BJ (cell line): ENCODE measurements at regions of chr20 and their contacts with region 1.

Region 1: GRCh38 chr20:39049684-39050554 is 87.8 kb downstream of the DHX35 start:
- DNase-seq: no peak
- H3K4me3 ChIP-seq: peak overlapping the region; percentile 73
- H3K27me3 ChIP-seq: peaks cover 4% of the 10 kb centered on the region
- CTCF ChIP-seq: peak; percentile 88

Region 2: DNA sequence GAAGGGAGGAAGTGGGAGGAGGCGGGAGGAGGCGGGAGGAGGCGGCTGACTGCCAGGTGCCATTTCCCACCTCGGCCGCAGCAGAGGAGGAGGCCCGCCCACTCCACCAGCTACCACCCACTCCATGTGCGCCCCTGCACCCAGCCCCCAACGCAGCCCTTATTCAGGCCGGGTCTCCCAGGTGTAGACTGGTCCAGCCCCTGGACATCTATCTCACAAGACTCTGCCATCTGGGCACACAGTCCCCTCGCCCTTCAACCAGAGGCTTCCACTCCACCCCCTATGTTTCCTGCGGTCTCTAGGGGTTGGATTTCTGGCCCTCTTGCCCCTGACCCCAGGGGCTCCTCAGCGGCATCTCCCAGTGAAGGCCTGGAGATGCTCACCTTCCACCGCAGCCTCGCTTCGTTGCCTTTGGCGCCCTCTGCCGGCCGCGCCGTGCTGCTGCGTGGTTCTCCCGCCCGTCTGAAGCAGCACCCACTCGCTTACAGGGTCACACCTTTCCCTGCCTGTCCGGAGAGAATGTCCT is 156.3 kb before region 1 on chr20:
- CTCF ChIA-PET with region 1: interaction called, 10 read pairs
- POLR2A ChIA-PET with region 1: no interaction called
- DNase-seq: no peak
- H3K4me3 ChIP-seq: no peak overlapping the region
- H3K27me3 ChIP-seq: peaks cover 24% of the 10 kb centered on the region
- CTCF ChIP-seq: peak; percentile 97

Region 3: DNA sequence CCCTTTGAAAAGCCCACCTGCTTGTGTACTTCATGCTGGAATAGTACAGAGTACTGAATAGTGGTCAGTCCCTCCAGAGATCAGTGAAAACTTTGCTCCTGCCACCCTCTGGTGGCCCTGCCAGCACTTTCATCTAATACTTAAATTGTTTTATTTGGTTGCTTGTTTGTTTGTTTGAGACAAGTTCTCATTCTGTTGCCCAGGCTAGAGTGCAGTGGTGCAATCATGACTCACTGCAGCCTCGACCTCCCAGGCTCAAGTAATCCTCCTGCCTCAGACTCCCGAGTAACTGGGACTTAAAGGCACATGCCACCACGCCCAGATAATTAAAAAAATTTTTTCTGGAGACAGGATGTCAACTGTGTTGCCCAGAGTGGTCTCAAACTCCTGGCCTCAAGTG is 114.6 kb before region 1 on chr20:
- CTCF ChIA-PET with region 1: interaction called, 163 read pairs
- POLR2A ChIA-PET with region 1: no interaction called
- DNase-seq: no peak
- H3K4me3 ChIP-seq: no peak overlapping the region
- H3K27me3 ChIP-seq: no peaks in the 10 kb centered on the region
- CTCF ChIP-seq: peak; percentile 21; the same call in 1 of the 2 replicates

Region 4: DNA sequence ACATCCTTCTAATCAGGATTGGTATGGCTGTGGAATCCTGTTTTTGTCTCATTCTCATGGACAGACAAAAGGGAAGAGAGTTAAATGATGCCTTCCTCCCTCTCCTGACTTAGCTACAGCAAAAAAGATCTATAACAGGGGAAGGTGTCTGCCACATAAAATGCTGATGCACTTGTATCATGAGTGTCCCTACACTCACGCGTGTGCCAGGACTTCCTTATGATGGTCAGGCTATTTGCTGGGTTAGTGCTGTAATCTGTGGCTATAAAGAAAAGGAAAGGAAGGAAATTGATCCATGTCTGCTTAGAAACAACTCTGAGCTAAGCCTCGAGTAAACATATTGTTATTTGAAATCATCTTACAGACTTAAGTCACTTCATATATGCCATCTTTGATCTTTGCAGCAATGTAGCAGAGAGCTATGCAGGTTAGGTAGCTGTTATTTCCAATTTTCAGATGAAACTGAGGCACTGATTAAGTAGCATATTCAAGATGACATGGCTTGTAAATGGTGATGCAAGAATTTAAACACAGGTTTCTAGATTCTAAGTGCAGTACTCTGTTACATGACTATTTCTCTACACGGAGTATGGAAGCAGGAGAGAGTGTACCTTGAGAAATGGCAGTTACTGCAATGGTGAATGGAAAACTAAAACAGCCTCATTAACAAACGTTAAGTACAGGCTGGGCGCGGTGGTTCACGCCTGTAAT is 96.1 kb before region 1 on chr20:
- CTCF ChIA-PET with region 1: no interaction called
- POLR2A ChIA-PET with region 1: no interaction called
- DNase-seq: no peak
- H3K4me3 ChIP-seq: no peak overlapping the region
- H3K27me3 ChIP-seq: no peaks in the 10 kb centered on the region
- CTCF ChIP-seq: no peak

Region 5: DNA sequence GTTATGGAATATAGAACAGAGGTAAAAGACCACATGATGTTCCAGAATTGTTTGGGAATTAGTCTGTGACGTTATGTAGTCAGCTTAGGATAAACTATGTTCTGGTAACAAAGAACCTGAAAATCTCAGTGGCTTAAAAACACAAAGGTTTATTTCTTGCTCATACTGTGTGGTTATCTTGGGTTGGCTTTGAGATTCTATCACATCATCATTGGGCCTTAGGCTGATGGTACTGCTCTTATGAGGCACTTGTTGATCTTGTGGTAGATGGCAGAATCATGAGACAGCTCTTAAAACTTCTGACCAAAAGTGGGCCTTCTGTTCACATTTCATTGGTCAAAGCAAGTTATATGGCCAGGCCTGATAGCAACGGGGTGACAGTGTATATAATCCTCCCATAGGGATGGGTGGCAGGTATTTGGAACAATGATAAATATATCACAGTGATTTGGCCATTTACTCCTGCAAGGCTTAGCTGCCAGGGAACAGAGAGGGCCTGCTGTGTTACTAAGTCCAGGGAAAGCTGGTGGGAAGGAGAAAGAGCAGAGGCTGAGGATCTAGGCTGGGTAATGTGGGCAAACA is 74.3 kb before region 1 on chr20:
- CTCF ChIA-PET with region 1: no interaction called
- POLR2A ChIA-PET with region 1: no interaction called
- DNase-seq: no peak
- H3K4me3 ChIP-seq: no peak overlapping the region
- H3K27me3 ChIP-seq: no peaks in the 10 kb centered on the region
- CTCF ChIP-seq: no peak

Region 6: GRCh38 chr20:38987777-38988176 is 62.1 kb before region 1 on chr20:
- CTCF ChIA-PET with region 1: interaction called, 16 read pairs
- POLR2A ChIA-PET with region 1: no interaction called
- DNase-seq: no peak
- H3K4me3 ChIP-seq: no peak overlapping the region
- H3K27me3 ChIP-seq: no peaks in the 10 kb centered on the region
- CTCF ChIP-seq: no peak

Region 7: DNA sequence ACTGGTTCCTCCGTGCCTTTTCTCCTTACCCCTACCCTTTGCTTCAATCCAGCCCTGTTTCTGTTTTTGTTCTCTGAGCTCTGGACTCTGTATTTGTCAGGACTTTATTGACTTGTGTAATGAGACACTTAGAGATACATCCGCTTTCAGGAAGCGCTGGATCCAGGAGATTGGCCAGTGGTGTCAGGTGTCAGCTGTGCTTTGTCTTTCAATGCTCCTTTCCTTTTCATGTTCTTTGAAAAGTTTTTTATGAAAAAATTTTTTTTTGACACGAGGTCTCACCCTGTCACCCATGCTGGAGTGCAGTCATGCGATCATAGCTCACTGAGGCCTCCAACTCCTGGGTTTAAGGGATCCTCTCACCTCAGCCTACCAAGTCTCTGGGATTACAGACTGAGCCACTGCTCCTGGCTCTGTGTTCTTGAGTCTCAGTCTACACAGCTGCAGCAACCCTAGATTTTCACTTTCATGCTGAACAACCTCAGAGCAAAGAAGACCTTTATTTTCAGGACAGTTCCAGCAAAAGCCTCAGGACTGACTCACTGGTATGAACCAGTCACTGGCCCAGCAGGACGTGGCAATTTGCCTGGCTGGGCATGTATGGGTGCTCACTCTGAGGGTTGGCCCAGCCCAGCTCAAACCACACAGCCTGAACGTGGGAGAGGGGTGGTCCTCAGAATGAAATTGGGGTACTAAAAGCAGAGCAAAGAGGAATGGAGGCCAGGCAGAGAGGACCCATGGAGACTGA is 20.7 kb after region 1 on chr20:
- CTCF ChIA-PET with region 1: interaction called, 399 read pairs
- POLR2A ChIA-PET with region 1: no interaction called
- DNase-seq: no peak
- H3K4me3 ChIP-seq: no peak overlapping the region
- H3K27me3 ChIP-seq: no peaks in the 10 kb centered on the region
- CTCF ChIP-seq: no peak

Region 8: DNA sequence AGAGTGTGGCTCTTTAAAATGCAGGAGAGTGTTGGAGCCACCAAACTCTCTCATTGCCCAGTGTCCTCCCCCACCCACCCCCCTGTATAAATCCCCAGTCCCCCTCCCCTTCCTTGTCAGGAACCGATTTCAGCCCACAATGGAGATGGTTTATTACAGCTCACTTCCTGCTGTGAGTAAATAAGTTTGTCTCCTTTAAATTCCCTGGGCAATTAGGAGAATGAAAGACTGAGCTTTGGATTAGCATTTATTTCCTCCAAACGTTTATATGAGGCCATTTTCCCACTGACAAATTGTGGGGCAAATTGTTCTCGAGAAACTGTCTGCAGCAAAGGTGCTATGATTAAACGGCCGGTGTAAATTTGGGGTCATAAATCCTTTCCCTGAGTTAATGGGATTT is 41.0 kb after region 1 on chr20:
- CTCF ChIA-PET with region 1: interaction called, 399 read pairs
- POLR2A ChIA-PET with region 1: no interaction called
- DNase-seq: no peak
- H3K4me3 ChIP-seq: no peak overlapping the region
- H3K27me3 ChIP-seq: no peaks in the 10 kb centered on the region
- CTCF ChIP-seq: no peak